ENCODE measurements at regions of chr12 and their contacts with region 1.

Region 1: DNA sequence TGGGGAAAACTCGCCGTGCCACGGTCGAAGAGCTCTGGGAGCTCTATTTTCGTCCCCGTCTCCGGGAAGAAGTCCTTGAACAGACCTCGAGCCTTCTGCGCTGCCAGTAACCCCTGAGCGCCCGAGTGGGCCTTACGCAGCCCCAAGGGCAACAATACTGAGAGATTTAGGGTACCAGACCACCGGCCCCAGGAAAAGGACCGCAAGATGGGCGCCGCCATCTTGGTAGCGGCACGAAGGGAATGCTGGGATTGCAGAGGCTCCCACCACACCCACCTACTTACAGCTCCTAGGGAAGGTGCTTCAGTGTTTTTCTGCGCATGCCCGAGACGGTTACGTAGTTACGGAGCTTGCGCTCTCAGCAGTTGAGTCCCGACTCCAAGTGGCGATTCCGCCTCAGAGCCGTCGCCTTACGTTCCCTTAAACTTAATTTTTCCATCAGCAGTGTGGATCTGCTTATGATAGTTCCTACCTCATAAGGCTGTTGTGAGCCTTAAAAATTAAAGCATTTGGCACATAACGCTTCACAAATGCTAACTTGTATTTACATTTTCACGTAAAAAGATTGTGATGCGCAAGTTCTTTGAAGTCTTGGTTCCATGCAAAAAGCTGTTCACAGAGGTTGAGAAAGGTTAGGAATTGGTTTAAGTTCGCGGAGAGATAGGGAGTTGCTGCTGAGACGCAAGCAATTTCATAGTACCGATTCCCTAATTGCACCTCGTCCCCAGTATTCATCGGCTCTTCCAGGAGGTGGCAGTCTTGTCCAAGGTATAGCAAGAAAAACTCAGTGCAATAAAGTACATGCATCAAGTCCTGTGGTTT is at the start of gene YARS2:
- DNase-seq: peak; percentile 92 to 94
- H3K4me3 ChIP-seq: peak within 1 kb of the TSS; percentile 84
- H3K27ac ChIP-seq: peak within 1 kb of the TSS; percentile 91
- H3K4me1 ChIP-seq: peaks cover 21% of the 10 kb centered on the region
- H3K27me3 ChIP-seq: no peaks in the 10 kb centered on the region
- CTCF ChIP-seq: peak; percentile 93
- total RNA-seq, gene YARS2: 34.3 and 36.6 TPM in 2 replicates

Region 2: GRCh38 chr12:31728917-31729640 is 1026.8 kb before region 1 on chr12 and contains the start of gene AMN1:
- CTCF ChIA-PET with region 1: no interaction called
- POLR2A ChIA-PET with region 1: no interaction called
- intact Hi-C with region 1: loop called (anchors 1 kb)
- DNase-seq: peak; percentile 97 to 100
- H3K4me3 ChIP-seq: peak within 1 kb of the TSS; percentile 80
- H3K27ac ChIP-seq: peak within 1 kb of the TSS; percentile 84
- H3K4me1 ChIP-seq: peaks cover 36% of the 10 kb centered on the region
- H3K27me3 ChIP-seq: no peaks in the 10 kb centered on the region
- CTCF ChIP-seq: no peak
- total RNA-seq, gene AMN1: 6.2 and 7.4 TPM in 2 replicates

Region 3: GRCh38 chr12:32455607-32456071 is 300.2 kb before region 1 on chr12:
- CTCF ChIA-PET with region 1: interaction called, 4 read pairs
- POLR2A ChIA-PET with region 1: no interaction called
- intact Hi-C with region 1: loop called (anchors 1 kb)
- DNase-seq: peak; percentile 22 to 69
- H3K4me3 ChIP-seq: no peak overlapping the region
- H3K27ac ChIP-seq: no peak overlapping the region
- H3K4me1 ChIP-seq: peaks cover 34% of the 10 kb centered on the region
- H3K27me3 ChIP-seq: no peaks in the 10 kb centered on the region
- CTCF ChIP-seq: peak; percentile 83

Region 4: DNA sequence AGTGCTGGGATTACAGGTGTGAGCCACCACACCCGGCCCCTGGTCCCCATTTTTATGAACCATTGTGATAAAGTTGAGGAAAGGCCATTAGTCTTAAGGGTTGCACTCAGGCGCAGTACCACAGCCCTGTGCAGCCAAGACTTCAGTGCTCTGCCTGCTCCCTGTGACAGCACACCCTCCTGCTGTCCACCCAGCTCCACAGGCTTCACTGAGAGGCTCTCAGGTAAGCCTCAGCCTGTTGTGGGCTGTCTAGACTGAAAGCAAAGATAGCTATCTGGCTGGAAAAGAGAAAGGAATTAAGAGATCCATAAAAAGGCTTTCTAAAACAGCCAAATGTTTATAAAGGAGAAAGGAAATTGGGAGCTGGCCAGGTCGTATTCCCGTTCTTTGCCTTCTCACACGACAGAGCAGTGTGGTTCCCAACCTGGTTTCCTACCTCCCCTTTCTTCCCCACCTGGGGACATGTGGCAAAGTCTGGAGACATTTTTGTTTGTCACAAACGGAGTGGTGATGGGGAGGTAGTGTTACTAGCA is 95.9 kb before region 1 on chr12:
- CTCF ChIA-PET with region 1: no interaction called
- POLR2A ChIA-PET with region 1: no interaction called
- intact Hi-C with region 1: no loop called
- DNase-seq: no peak
- H3K4me3 ChIP-seq: no peak overlapping the region
- H3K27ac ChIP-seq: no peak overlapping the region
- H3K4me1 ChIP-seq: no peaks in the 10 kb centered on the region
- H3K27me3 ChIP-seq: no peaks in the 10 kb centered on the region
- CTCF ChIP-seq: no peak

Region 5: DNA sequence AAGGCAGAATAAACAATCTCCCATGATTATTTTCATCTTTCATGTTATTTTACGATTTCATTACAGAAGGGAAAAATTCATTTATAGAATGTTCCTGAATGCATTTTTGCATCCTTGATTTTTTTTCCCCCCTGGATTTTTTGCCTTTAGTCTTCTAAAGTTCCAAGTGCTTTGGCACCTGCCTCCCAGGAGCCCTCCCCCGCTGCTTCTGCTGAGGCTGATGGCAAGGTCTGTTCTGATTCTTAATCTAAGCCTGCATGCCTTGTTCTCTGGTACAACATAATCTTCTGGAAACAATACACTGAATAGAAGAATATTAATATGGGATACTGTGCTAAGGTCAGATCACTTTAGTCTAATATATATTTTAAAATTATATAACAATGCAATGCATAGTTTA is 18.1 kb before region 1 on chr12:
- CTCF ChIA-PET with region 1: no interaction called
- POLR2A ChIA-PET with region 1: no interaction called
- intact Hi-C with region 1: no loop called
- DNase-seq: no peak
- H3K4me3 ChIP-seq: no peak overlapping the region
- H3K27ac ChIP-seq: no peak overlapping the region
- H3K4me1 ChIP-seq: no peaks in the 10 kb centered on the region
- H3K27me3 ChIP-seq: no peaks in the 10 kb centered on the region
- CTCF ChIP-seq: no peak

Region 6: GRCh38 chr12:32907898-32908476 is 152.1 kb after region 1 on chr12:
- CTCF ChIA-PET with region 1: no interaction called
- POLR2A ChIA-PET with region 1: no interaction called
- intact Hi-C with region 1: no loop called
- DNase-seq: no peak
- H3K4me3 ChIP-seq: no peak overlapping the region
- H3K27ac ChIP-seq: no peak overlapping the region
- H3K4me1 ChIP-seq: peaks cover 19% of the 10 kb centered on the region
- H3K27me3 ChIP-seq: no peaks in the 10 kb centered on the region
- CTCF ChIP-seq: no peak

Region 7: GRCh38 chr12:32918890-32919801 is 163.3 kb after region 1 on chr12:
- CTCF ChIA-PET with region 1: interaction called, 12 read pairs
- POLR2A ChIA-PET with region 1: no interaction called
- intact Hi-C with region 1: loop called (anchors 1 kb)
- DNase-seq: peak in 1 of 2 experiments; percentile 63
- H3K4me3 ChIP-seq: no peak overlapping the region
- H3K27ac ChIP-seq: peak overlapping the region; percentile 45; the same call in 1 of the 2 replicates
- H3K4me1 ChIP-seq: peaks cover 45% of the 10 kb centered on the region
- H3K27me3 ChIP-seq: no peaks in the 10 kb centered on the region
- CTCF ChIP-seq: peak; percentile 60

Region 8: GRCh38 chr12:33180930-33181329 is 425.1 kb after region 1 on chr12:
- CTCF ChIA-PET with region 1: interaction called, 3 read pairs
- POLR2A ChIA-PET with region 1: no interaction called
- intact Hi-C with region 1: loop called (anchors 5 kb)
- DNase-seq: peak; percentile 48 to 90
- H3K4me3 ChIP-seq: no peak overlapping the region
- H3K27ac ChIP-seq: no peak overlapping the region
- H3K4me1 ChIP-seq: peaks cover 25% of the 10 kb centered on the region
- H3K27me3 ChIP-seq: no peaks in the 10 kb centered on the region
- CTCF ChIP-seq: no peak

Region 9: DNA sequence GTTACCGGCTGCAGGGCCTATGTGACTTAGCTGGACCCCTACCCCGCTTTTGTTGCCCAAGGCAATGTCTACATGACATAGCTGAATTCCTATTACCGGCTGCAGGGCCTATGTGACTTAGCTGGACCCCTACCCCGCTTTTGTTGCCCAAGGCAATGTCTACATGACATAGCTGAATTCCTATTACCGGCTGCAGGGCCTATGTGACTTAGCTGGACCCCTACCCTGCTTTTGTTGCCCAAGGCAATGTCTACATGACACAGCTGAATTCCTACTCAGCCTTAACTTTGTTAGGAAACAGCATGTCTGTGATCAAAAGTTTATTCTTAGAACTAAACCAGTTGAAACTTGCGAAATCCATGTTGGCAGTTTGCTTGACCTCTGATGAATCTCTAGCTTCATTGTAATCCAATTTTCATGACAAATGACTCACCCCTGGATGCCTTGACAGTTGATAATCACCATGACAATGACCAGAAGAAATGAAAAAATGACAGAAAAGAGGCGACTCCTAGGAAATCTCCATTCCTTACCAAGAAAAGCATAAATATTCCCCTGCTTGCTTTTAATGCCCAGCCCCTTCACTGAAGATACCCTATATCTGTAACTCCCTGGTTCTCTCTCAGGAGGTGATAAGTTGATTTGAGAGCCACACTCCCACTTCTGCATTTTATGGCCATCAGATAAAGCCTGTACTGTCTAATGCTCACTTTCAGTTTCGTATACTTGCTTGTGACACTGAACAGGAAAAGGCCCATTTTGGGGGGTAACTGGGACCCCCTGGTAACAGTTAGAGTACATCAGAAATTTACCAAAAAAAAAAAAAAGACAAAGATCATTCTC is 832.2 kb after region 1 on chr12:
- CTCF ChIA-PET with region 1: no interaction called
- POLR2A ChIA-PET with region 1: interaction called, 6 read pairs
- intact Hi-C with region 1: loop called (anchors 5 kb)
- DNase-seq: peak; percentile 66 to 97
- H3K4me3 ChIP-seq: peak overlapping the region; percentile 38; the same call in 1 of the 2 replicates
- H3K27ac ChIP-seq: peak overlapping the region; percentile 96
- H3K4me1 ChIP-seq: peaks cover 50% of the 10 kb centered on the region
- H3K27me3 ChIP-seq: no peaks in the 10 kb centered on the region
- CTCF ChIP-seq: no peak

Region 10: GRCh38 chr12:34218165-34219045 is 1462.5 kb after region 1 on chr12:
- CTCF ChIA-PET with region 1: interaction called, 3 read pairs
- POLR2A ChIA-PET with region 1: no interaction called
- intact Hi-C with region 1: loop called (anchors 1 kb)
- DNase-seq: peak; percentile 64 to 73
- H3K4me3 ChIP-seq: peak overlapping the region; percentile 63; the same call in 1 of the 2 replicates
- H3K27ac ChIP-seq: no peak overlapping the region
- H3K4me1 ChIP-seq: no peaks in the 10 kb centered on the region
- H3K27me3 ChIP-seq: no peaks in the 10 kb centered on the region
- CTCF ChIP-seq: peak; percentile 91

Measured in PC-9 (cell line).